ENCODE measurements at regions of chr17 and their contacts with region 1.

Region 1: GRCh38 chr17:38667099-38667786 is 7.5 kb downstream of the EPOP start:
- DNase-seq: peak; percentile 51 to 69 (median 59)
- ATAC-seq: peak; percentile 47 to 79 (median 72)
- H3K4me3 ChIP-seq: no peak overlapping the region
- H3K27ac ChIP-seq: no peak overlapping the region
- H3K4me1 ChIP-seq: no peaks in the 10 kb centered on the region
- H3K27me3 ChIP-seq: peaks cover 0 to 44% (median 14%) of the 10 kb centered on the region in 9 donors
- CTCF ChIP-seq: peak; percentile 94 to 100 (median 98)
- POLR2A ChIP-seq: no peak

Region 2: DNA sequence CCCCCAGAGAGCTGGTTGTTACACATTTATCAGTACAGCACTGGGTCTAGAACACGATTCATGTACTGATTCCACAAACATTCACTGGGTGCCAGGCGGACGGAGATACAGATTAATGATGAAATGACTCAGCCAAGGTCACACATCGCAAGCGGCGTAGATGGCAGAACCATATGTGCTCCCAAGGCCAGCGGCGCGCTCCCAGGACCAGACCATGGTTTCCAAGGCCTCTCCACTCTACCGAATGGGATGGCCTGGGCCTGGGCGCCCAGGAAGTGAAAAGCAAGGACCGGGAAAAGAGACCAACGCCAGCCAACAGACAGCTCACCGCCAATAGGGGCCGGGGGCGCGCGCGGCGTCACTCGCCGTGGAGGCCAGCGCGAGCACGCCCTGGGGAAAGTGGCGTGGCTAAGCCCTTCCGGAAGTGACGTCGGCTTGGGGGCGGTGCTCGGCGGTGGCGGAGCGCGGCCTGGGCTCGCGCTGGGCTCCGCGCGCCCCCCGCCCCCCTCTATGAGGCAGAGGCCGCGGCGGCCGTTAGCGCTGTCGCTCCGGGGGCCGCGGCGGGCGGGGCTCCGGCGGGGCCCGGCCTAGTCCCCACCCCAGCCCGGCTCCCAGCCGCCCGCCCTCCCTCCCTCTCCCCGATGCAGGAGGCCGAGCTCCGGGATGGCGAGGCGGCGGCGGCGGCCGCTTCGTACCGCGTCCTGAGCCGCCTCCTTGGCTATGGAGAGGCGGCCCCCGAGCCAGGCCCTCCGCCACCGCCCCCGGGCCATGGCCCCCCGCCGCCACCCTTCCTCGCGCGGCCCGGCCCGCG is 315.6 kb before region 1 on chr17 and contains the start of gene SOCS7:
- intact Hi-C with region 1: loop called in 1 of 10 experiments (anchors 10 kb)
- DNase-seq: peak; percentile 94 to 97 (median 96)
- ATAC-seq: peak; percentile 95 to 97 (median 97)
- H3K4me3 ChIP-seq: peak within 1 kb of the TSS; percentile 64 to 97 (median 89)
- H3K27ac ChIP-seq: peak within 1 kb of the TSS; percentile 30 to 93 (median 86)
- H3K4me1 ChIP-seq: peaks cover 0 to 45% (median 32%) of the 10 kb centered on the region in 12 donors
- H3K27me3 ChIP-seq: no peaks in the 10 kb centered on the region
- CTCF ChIP-seq: no peak
- POLR2A ChIP-seq: peak in 1 of 2 donors; percentile 68
- total RNA-seq, gene SOCS7: 11.4 to 19.2 (median 15.0) TPM

Region 3: GRCh38 chr17:38428112-38428642 is 239.1 kb before region 1 on chr17 and contains the start of gene ARHGAP23:
- intact Hi-C with region 1: loop called (anchors 2 to 10 kb)
- DNase-seq: peak; percentile 78 to 89 (median 86)
- ATAC-seq: peak; percentile 55 to 78 (median 74)
- H3K4me3 ChIP-seq: peak within 1 kb of the TSS; percentile 72 to 98 (median 94)
- H3K27ac ChIP-seq: peak within 1 kb of the TSS; percentile 89 to 99 (median 96)
- H3K4me1 ChIP-seq: peaks cover 9 to 87% (median 53%) of the 10 kb centered on the region in 12 donors
- H3K27me3 ChIP-seq: no peaks in the 10 kb centered on the region
- CTCF ChIP-seq: no peak
- POLR2A ChIP-seq: peak in 1 of 2 donors; percentile 50
- total RNA-seq, gene ARHGAP23: 28.0 to 72.3 (median 66.3) TPM

Region 4: DNA sequence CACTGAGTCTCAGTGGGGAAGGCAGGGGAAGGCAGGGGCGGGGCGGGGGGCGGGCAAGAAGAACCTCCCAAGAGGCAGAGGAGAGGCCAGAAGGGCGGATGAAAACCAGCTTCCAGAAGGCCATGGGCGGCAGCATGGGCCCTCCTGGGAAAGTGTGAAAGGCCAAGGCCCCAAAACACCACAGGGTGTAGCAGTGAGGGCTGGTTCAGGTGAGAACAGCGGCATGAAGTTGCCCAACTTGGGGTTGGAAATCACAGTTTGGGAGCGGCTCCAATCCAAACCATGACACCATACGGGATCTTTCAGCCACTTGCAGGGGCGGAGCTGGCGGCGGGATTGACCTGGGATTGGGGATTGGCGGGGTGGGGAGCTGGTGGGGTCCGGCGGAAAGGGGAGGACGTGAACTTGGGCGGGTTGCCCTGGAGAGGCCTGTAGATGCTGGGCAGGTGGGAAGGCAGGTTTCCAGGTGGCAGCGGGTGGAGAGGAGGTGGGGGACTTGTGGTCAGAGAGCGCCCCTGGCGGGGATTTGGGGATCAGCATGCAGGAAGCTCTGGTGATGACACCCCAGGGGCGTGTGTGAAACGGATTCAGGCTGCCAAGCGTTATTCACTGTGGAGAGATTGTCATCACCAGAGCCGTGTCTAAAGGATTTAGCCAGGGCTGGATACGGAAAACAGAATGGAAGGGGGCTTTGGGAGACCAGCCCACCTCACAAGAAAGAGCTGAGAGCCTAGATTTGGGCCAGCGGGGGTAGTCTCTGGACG is 158.1 kb before region 1 on chr17:
- intact Hi-C with region 1: loop called in 5 of 10 experiments (anchors 5 to 10 kb)
- DNase-seq: peak; percentile 70 to 79 (median 78)
- ATAC-seq: peak; percentile 63 to 74 (median 66)
- H3K4me3 ChIP-seq: peak overlapping the region in 5 of 12 donors; percentile 17 to 41 (median 31)
- H3K27ac ChIP-seq: peak overlapping the region in 1 of 12 donors; percentile 44
- H3K4me1 ChIP-seq: peaks cover 0 to 30% (median 7%) of the 10 kb centered on the region in 12 donors
- H3K27me3 ChIP-seq: peaks cover 0 to 32% (median 0%) of the 10 kb centered on the region in 9 donors
- CTCF ChIP-seq: peak; percentile 48 to 82 (median 60)
- POLR2A ChIP-seq: no peak

Region 5: GRCh38 chr17:38584350-38584925 is 82.8 kb before region 1 on chr17:
- intact Hi-C with region 1: loop called in 1 of 10 experiments (anchors 10 kb)
- DNase-seq: peak; percentile 39 to 84 (median 56)
- ATAC-seq: peak; percentile 74 to 91 (median 80)
- H3K4me3 ChIP-seq: no peak overlapping the region
- H3K27ac ChIP-seq: no peak overlapping the region
- H3K4me1 ChIP-seq: peaks cover 0 to 10% (median 0%) of the 10 kb centered on the region in 12 donors
- H3K27me3 ChIP-seq: peaks cover 7 to 85% (median 26%) of the 10 kb centered on the region in 9 donors
- CTCF ChIP-seq: peak; percentile 79 to 98 (median 92)
- POLR2A ChIP-seq: no peak

Region 6: DNA sequence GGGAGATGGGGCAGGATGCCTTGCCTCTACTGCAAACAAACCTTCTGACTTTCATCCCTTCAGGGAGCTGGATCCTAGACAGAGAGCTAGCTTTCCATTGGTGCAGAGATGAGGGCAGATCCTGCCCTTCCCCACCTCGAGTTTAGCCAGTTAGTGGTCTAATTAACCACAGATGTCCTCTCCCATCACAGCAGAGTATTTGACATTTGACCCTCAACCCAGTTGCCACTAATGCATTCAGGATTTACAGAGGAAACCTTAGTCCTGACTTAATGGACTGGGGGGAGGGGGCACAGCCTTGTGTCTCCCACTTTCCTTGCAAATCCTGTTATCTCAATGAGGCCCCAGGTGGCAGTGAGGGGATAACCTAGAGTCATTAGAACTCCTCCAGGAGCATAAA is 121.9 kb after region 1 on chr17:
- intact Hi-C with region 1: no loop called
- DNase-seq: no peak
- ATAC-seq: no peak
- H3K4me3 ChIP-seq: no peak overlapping the region
- H3K27ac ChIP-seq: no peak overlapping the region
- H3K4me1 ChIP-seq: peaks cover 0 to 22% (median 9%) of the 10 kb centered on the region in 12 donors
- H3K27me3 ChIP-seq: no peaks in the 10 kb centered on the region
- CTCF ChIP-seq: no peak
- POLR2A ChIP-seq: no peak

Region 7: DNA sequence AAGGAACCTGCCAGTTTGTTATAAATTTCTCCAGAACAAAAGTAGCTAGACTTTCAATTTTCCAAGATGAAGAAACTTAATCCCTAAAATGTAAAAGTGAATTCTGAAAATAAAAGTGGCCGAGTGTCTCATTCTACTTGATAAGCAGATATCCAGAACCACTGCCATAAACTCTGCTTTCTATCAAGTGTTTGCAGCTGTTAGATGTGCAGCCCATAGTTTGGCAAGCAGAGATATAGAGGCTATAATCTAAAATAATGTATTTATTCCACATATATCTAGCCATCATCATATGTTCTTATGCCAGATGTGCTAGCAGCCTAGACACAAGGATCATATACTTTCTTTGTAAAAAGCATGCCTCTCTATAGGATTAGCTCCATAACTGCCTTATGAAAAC is 748.9 kb after region 1 on chr17:
- intact Hi-C with region 1: no loop called
- DNase-seq: no peak
- ATAC-seq: no peak
- H3K4me3 ChIP-seq: no peak overlapping the region
- H3K27ac ChIP-seq: no peak overlapping the region
- H3K4me1 ChIP-seq: no peaks in the 10 kb centered on the region
- H3K27me3 ChIP-seq: no peaks in the 10 kb centered on the region
- CTCF ChIP-seq: no peak
- POLR2A ChIP-seq: no peak